AG04449 (cell line): ENCODE measurements at regions of chr11 and their contacts with region 1.

Region 1: GRCh38 chr11:11787305-11788062 is 54.3 kb upstream of the USP47 start:
- DNase-seq: no peak
- H3K4me3 ChIP-seq: no peak overlapping the region
- CTCF ChIP-seq: peak; percentile 64

Region 2: GRCh38 chr11:10803676-10804075 is 983.8 kb before region 1 on chr11:
- CTCF ChIA-PET with region 1: interaction called, 13 read pairs
- POLR2A ChIA-PET with region 1: no interaction called
- DNase-seq: no peak
- H3K4me3 ChIP-seq: no peak overlapping the region
- CTCF ChIP-seq: no peak

Region 3: GRCh38 chr11:11022125-11022730 is 765.3 kb before region 1 on chr11:
- CTCF ChIA-PET with region 1: interaction called, 189 read pairs
- POLR2A ChIA-PET with region 1: no interaction called
- DNase-seq: no peak
- H3K4me3 ChIP-seq: no peak overlapping the region
- CTCF ChIP-seq: no peak

Region 4: DNA sequence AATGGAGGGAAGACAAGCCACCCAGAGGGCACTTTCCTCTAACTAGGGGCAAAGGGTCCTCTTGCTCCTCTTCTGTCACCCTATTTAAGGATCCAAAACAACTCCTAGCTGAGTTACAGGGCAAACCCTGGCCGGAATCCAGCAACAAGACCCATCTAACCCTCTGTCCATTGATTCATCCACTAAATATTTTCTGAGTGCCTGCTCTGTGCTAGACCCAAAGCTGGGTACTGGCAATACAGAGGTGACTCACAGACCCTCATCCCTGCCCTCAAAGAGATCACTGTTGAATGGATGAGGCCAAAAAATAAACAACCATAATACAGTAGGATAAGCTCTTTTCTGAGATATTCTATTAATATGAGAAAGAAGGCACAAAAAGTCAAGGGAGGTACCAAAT is 161.4 kb before region 1 on chr11:
- CTCF ChIA-PET with region 1: interaction called, 10 read pairs
- POLR2A ChIA-PET with region 1: no interaction called
- DNase-seq: no peak
- H3K4me3 ChIP-seq: no peak overlapping the region
- CTCF ChIP-seq: no peak

Region 5: DNA sequence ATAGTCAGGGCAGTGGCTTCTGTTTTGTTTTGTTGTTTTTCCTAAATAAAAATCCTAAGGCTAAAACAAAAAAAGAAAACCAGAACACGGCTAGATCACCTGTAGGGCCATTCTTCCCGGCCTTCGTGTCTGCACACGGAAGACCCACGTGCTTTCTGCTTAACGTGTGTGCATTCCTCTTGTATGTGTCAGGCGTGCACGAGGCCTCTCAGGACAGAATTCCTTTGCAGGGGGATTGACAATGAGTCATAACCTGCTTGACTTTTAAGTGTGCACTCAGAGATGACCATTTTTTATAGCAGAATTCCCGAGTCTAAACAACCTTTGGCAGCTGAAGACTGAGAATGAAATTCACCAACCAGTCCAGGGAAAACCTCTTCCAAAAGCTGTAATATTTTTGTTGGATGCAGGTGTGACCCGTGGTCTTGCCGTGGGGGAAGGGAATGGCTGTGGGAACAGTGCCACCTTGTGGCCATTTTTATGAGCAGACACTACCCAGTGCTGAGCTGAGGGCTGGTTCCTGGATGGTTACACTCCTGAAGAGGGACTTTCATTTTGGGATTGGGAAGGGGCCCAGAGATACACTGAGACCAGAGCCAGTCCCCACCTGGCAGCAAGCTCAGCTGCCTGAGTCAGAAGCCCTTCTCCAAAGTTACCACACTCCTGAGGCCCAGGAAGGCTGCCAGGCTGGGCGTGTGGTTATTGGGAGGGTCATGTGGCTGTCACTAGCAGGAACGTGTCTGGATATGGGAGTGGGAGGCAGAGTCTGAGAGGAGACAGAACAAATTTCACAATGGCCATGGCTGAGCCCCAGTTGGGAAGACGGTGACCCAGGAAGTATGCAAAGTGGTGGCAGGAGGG is 256.7 kb after region 1 on chr11:
- CTCF ChIA-PET with region 1: interaction called, 14 read pairs
- POLR2A ChIA-PET with region 1: no interaction called
- DNase-seq: peak; percentile 94
- H3K4me3 ChIP-seq: peak overlapping the region; percentile 34
- CTCF ChIP-seq: peak; percentile 82